ENCODE measurements at regions of chr5 and their contacts with region 1.

Region 1: DNA sequence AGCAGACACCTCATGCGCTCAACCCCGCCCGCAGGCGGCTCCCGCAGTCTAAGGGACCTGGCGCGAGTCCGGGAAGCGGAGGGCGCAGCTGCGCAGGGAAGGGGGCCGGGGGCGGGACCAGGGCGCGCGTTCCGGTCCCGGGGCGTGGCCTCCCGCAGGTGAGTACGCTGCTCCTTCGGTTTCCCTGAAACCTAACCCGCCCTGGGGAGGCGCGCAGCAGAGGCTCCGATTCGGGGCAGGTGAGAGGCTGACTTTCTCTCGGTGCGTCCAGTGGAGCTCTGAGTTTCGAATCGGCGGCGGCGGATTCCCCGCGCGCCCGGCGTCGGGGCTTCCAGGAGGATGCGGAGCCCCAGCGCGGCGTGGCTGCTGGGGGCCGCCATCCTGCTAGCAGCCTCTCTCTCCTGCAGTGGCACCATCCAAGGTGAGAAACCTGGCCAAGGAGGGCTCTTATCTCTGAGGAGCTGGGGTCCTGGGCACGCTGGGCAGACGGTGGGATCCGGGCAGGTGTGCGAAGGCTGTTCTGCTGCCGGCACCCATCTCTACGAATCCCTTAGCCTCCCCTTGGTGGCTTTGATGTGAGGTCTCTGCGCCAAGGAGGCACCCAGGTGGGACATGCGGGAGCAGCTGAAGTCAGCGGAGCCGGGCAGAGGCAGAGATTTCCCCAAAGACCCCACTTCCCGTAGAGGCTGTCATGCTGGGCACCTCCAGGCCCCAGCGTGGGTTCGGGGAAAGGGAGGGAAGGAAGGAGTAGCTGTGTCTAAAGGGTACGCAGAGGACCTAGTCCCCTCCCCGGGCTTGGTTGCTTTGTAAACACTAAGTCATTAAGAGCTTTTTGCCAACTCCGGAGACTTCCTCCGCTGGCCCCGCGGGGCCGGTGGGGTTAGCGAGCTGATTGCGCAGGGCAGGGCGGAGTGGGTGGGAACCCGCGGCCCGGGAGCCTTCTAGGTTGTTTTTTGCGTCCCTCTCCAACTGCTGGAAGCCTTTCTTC is at the start of gene F2RL1:
- DNase-seq: peak; percentile 17 to 44 (median 37)
- ATAC-seq: peak; percentile 78
- H3K4me3 ChIP-seq: peak within 1 kb of the TSS; percentile 89
- H3K4me3 Mint-ChIP-seq: peak within 1 kb of the TSS; percentile 80 to 93 (median 86)
- H3K27ac ChIP-seq: peak within 1 kb of the TSS; percentile 38
- H3K27ac Mint-ChIP-seq: peak within 1 kb of the TSS in 5 of 9 donors; percentile 41 to 76 (median 56)
- H3K4me1 ChIP-seq: peaks cover 7 to 9% of the 10 kb centered on the region in 2 donors
- H3K4me1 Mint-ChIP-seq: peaks cover 8 to 24% (median 16%) of the 10 kb centered on the region in 7 donors
- H3K27me3 ChIP-seq: no peaks in the 10 kb centered on the region
- H3K27me3 Mint-ChIP-seq: peaks cover 0 to 70% (median 29%) of the 10 kb centered on the region in 5 donors
- total RNA-seq, gene F2RL1: 0.48 to 3.2 (median 2.7) TPM

Region 2: DNA sequence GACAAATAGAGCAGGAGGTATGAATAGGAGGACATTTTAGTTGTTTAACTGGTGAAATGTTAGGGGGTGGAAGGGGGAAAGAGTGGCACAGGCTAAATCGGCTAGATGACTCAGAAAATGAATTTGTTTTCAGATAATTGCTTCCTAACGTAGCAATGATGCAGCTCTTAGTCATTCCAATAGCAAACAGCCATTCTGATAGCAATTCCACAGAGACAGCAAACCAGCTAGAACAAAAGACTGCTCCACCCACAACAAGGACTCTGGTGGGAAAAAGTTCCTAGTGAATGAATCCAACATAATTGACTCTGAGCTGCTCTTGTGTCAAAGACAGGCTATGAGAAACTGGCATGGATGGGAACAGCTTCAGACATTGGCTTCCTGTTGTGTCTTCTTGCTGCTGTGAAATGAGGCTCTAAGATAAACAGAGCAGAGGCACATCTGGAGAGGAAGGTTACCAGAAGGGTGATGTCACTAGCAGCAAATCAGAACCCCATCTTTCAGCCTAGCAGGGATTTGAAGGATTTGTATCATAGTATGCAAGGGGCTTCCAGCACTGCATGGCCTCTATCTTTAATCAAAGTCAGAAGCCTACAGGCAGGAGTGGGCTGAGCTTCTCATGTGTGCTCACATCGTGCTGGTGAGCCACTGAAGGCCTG is 28.4 kb before region 1 on chr5:
- CTCF ChIA-PET with region 1: no interaction called
- POLR2A ChIA-PET with region 1: no interaction called
- intact Hi-C with region 1: loop called in 1 of 2 experiments (anchors 2 kb)
- DNase-seq: peak in 5 of 9 donors; percentile 0 to 17 (median 9)
- ATAC-seq: peak; percentile 38
- H3K4me3 ChIP-seq: no peak overlapping the region
- H3K4me3 Mint-ChIP-seq: no peak overlapping the region
- H3K27ac ChIP-seq: no peak overlapping the region
- H3K27ac Mint-ChIP-seq: peak overlapping the region in 7 of 9 donors; percentile 21 to 88 (median 68)
- H3K4me1 ChIP-seq: no peaks in the 10 kb centered on the region
- H3K4me1 Mint-ChIP-seq: peaks cover 8 to 27% (median 20%) of the 10 kb centered on the region in 7 donors
- H3K27me3 ChIP-seq: no peaks in the 10 kb centered on the region
- H3K27me3 Mint-ChIP-seq: peaks cover 0 to 3% (median 0%) of the 10 kb centered on the region in 5 donors

Region 3: GRCh38 chr5:76849419-76850291 is 30.5 kb after region 1 on chr5 and contains the start of gene S100Z:
- CTCF ChIA-PET with region 1: no interaction called
- POLR2A ChIA-PET with region 1: interaction called, 3 read pairs
- intact Hi-C with region 1: loop called in 1 of 2 experiments (anchors 1 kb)
- DNase-seq: peak in 7 of 9 donors; percentile 20 to 56 (median 45)
- ATAC-seq: peak; percentile 84
- H3K4me3 ChIP-seq: no peak within 1 kb of the TSS
- H3K4me3 Mint-ChIP-seq: peak within 1 kb of the TSS; percentile 56 to 82 (median 68)
- H3K27ac ChIP-seq: peak within 1 kb of the TSS; percentile 44
- H3K27ac Mint-ChIP-seq: peak within 1 kb of the TSS; percentile 58 to 94 (median 81)
- H3K4me1 ChIP-seq: peaks cover 0 to 25% of the 10 kb centered on the region in 2 donors
- H3K4me1 Mint-ChIP-seq: peaks cover 21 to 43% (median 35%) of the 10 kb centered on the region in 7 donors
- H3K27me3 ChIP-seq: no peaks in the 10 kb centered on the region
- H3K27me3 Mint-ChIP-seq: peaks cover 0 to 2% (median 0%) of the 10 kb centered on the region in 5 donors
- total RNA-seq, gene S100Z: 1.3 to 5.3 (median 4.2) TPM in 3 of 5 experiments, not detected in the others

Region 4: GRCh38 chr5:76855961-76856360 is 36.8 kb after region 1 on chr5:
- CTCF ChIA-PET with region 1: no interaction called
- POLR2A ChIA-PET with region 1: no interaction called
- intact Hi-C with region 1: loop called in 1 of 2 experiments (anchors 5 kb)
- DNase-seq: peak in 7 of 9 donors; percentile 23 to 60 (median 43)
- ATAC-seq: peak; percentile 88
- H3K4me3 ChIP-seq: no peak overlapping the region
- H3K4me3 Mint-ChIP-seq: peak overlapping the region; percentile 35 to 77 (median 70)
- H3K27ac ChIP-seq: peak overlapping the region; percentile 27
- H3K27ac Mint-ChIP-seq: peak overlapping the region; percentile 49 to 95 (median 84)
- H3K4me1 ChIP-seq: peaks cover 21 to 27% of the 10 kb centered on the region in 2 donors
- H3K4me1 Mint-ChIP-seq: peaks cover 27 to 49% (median 45%) of the 10 kb centered on the region in 7 donors
- H3K27me3 ChIP-seq: no peaks in the 10 kb centered on the region
- H3K27me3 Mint-ChIP-seq: no peaks in the 10 kb centered on the region

Region 5: DNA sequence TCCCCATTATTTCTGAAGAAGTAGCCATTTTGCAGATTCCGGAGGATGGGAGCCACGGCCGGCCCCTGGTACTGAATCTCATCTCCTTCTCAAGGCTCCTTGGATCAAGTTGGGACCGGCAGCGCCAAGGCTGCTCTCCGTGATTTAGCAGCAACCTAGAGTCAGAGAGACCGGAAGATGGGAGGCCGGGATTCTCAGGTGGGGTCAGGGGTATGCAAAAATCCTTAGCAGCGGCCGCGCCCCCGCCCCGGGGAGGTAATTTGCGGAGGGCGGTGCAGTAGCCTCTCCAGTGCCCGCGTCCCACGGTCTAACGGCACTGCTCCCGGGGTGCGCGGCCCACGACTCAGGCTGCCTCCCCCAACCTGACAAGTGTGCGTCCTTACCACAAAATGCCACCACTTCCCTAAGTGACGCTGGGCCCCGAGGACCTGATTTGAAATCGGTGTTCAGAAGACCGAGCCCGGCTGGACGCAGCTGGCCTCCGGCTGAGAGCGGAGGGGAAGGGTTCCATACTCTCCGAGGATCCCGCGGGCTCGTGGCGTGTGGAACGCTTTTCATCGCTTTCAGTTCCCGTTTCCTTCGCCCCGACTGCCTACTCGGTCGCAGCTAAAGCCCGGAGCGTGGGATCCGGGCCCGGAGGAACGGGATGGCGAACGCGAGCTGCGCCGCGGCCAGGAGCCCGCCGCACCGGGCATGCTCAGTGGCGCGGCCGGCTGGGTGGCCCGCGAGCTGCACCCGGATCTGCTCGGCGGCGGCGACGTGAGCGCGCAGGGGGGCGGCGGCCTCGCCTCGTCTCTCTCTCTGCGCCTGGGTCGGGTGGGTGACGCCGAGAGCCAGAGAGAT is 1540.9 kb after region 1 on chr5 and contains the start of gene SCAMP1:
- CTCF ChIA-PET with region 1: no interaction called
- POLR2A ChIA-PET with region 1: no interaction called
- intact Hi-C with region 1: no loop called
- DNase-seq: peak; percentile 84 to 96 (median 93)
- ATAC-seq: peak; percentile 92
- H3K4me3 ChIP-seq: peak within 1 kb of the TSS; percentile 99
- H3K4me3 Mint-ChIP-seq: peak within 1 kb of the TSS; percentile 89 to 97 (median 94)
- H3K27ac ChIP-seq: peak within 1 kb of the TSS; percentile 85
- H3K27ac Mint-ChIP-seq: peak within 1 kb of the TSS; percentile 71 to 97 (median 96)
- H3K4me1 ChIP-seq: peaks cover 11 to 16% of the 10 kb centered on the region in 2 donors
- H3K4me1 Mint-ChIP-seq: peaks cover 27 to 64% (median 55%) of the 10 kb centered on the region in 7 donors
- H3K27me3 ChIP-seq: no peaks in the 10 kb centered on the region
- H3K27me3 Mint-ChIP-seq: no peaks in the 10 kb centered on the region
- total RNA-seq, gene SCAMP1: 16.9 to 27.6 (median 23.0) TPM

Measured in naive thymus-derived CD4-positive, alpha-beta T cell (primary cell).